MCF 10A (cell line): ENCODE measurements at regions of chr4 and their contacts with region 1.

Region 1: GRCh38 chr4:54971474-54971950 is 153.9 kb downstream of the KDR start:
- DNase-seq: peak; percentile 63
- H3K4me3 Mint-ChIP-seq: no peak overlapping the region
- H3K27ac Mint-ChIP-seq: peak overlapping the region; percentile 78
- H3K4me1 Mint-ChIP-seq: peaks cover 6% of the 10 kb centered on the region
- H3K27me3 Mint-ChIP-seq: no peaks in the 10 kb centered on the region
- CTCF ChIP-seq: peak; percentile 65

Region 2: DNA sequence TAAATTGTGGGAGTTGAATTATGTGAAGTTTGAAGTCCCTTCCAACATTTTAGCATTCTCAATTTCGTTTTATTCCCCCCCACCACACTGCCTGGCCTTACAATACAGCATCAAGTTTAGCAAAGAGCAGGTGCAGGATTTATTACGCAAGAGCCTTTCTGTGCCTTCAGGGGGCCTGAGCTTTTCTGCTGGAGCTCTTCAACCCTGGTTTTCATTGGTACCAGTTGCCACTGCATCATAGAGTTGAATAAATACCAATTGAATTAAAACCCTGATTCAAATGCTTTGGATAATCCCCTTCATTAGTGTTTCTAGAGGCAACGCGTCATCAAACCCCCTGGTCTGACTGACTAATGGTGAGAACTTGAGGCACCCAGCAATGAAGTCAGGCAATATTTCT is 357.4 kb before region 1 on chr4:
- CTCF ChIA-PET with region 1: no interaction called
- POLR2A ChIA-PET with region 1: no interaction called
- intact Hi-C with region 1: no loop called
- DNase-seq: no peak
- H3K4me3 Mint-ChIP-seq: no peak overlapping the region
- H3K27ac Mint-ChIP-seq: no peak overlapping the region
- H3K4me1 Mint-ChIP-seq: no peaks in the 10 kb centered on the region
- H3K27me3 Mint-ChIP-seq: peaks cover 10% of the 10 kb centered on the region
- CTCF ChIP-seq: no peak

Region 3: GRCh38 chr4:54823616-54824015 is 147.9 kb before region 1 on chr4:
- CTCF ChIA-PET with region 1: no interaction called
- POLR2A ChIA-PET with region 1: no interaction called
- intact Hi-C with region 1: no loop called
- DNase-seq: no peak
- H3K4me3 Mint-ChIP-seq: no peak overlapping the region
- H3K27ac Mint-ChIP-seq: no peak overlapping the region
- H3K4me1 Mint-ChIP-seq: no peaks in the 10 kb centered on the region
- H3K27me3 Mint-ChIP-seq: no peaks in the 10 kb centered on the region
- CTCF ChIP-seq: no peak

Region 4: GRCh38 chr4:54961357-54961975 is 10.0 kb before region 1 on chr4:
- CTCF ChIA-PET with region 1: interaction called, 64 read pairs
- POLR2A ChIA-PET with region 1: interaction called, 4 read pairs
- intact Hi-C with region 1: no loop called
- DNase-seq: peak; percentile 54
- H3K4me3 Mint-ChIP-seq: no peak overlapping the region
- H3K27ac Mint-ChIP-seq: no peak overlapping the region
- H3K4me1 Mint-ChIP-seq: no peaks in the 10 kb centered on the region
- H3K27me3 Mint-ChIP-seq: peaks cover 24% of the 10 kb centered on the region
- CTCF ChIP-seq: peak; percentile 54

Region 5: DNA sequence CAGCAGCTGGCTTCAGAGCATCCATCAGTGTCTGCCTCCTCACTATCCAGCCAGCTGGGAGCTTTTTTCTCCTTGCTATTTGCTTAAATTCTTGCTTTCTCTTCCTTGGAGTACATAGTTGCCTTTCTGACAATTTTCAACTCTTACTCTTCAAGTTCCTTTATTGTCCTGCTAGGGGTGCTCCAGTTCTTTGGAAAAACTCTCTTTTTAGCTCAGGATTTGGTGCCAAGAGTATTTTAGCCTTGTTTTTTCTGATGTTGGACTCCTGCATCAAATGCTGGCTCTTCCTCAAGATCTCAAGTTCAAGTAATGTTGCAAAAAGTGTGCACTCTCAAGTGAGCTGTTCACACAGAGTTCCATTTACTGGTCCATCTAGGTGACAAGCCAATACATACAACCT is 27.5 kb after region 1 on chr4:
- CTCF ChIA-PET with region 1: interaction called, 23 read pairs
- POLR2A ChIA-PET with region 1: no interaction called
- intact Hi-C with region 1: no loop called
- DNase-seq: peak; percentile 47
- H3K4me3 Mint-ChIP-seq: no peak overlapping the region
- H3K27ac Mint-ChIP-seq: no peak overlapping the region
- H3K4me1 Mint-ChIP-seq: peaks cover 26% of the 10 kb centered on the region
- H3K27me3 Mint-ChIP-seq: no peaks in the 10 kb centered on the region
- CTCF ChIP-seq: peak; percentile 47

Region 6: DNA sequence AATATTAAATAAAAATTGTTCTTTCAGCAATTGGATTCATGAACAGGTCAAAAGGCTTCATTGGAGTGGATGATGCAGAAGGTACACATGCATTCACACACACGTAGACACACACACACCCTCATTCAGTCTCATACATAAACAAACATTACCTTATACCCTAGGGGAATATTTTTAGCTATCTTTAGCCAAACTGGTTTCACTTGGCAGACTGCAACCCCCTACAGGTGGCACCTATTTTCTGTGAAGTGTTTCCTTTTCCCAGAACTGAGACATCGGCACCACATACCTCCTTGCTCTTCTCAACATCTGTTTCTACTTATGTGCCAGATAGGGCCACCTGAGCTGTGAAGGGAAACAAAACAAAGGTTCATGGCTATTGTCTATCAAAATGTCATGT is 172.4 kb after region 1 on chr4:
- CTCF ChIA-PET with region 1: no interaction called
- POLR2A ChIA-PET with region 1: no interaction called
- intact Hi-C with region 1: no loop called
- DNase-seq: peak; percentile 57
- H3K4me3 Mint-ChIP-seq: no peak overlapping the region
- H3K27ac Mint-ChIP-seq: peak overlapping the region; percentile 47
- H3K4me1 Mint-ChIP-seq: peaks cover 7% of the 10 kb centered on the region
- H3K27me3 Mint-ChIP-seq: no peaks in the 10 kb centered on the region
- CTCF ChIP-seq: no peak

Region 7: DNA sequence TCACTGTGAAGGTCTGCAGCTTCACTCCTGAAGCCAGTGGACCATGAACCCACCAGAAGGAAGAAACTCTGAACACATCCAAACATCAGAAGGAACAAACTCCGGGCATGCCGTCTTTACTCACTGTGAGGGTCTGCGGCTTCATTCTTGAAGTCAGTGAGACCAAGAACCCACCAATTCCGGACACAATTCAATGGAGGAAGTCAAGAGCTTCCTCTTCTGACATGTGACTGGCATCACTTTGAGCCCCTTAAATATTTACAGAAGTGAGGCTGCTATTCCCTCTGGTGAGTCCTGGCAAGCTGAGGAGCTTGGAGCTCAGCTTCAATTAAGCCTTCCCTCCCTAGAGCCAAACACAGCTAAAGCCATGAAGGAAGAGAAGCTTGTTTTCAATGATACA is 271.0 kb after region 1 on chr4:
- CTCF ChIA-PET with region 1: no interaction called
- POLR2A ChIA-PET with region 1: no interaction called
- intact Hi-C with region 1: no loop called
- DNase-seq: no peak
- H3K4me3 Mint-ChIP-seq: no peak overlapping the region
- H3K27ac Mint-ChIP-seq: no peak overlapping the region
- H3K4me1 Mint-ChIP-seq: no peaks in the 10 kb centered on the region
- H3K27me3 Mint-ChIP-seq: no peaks in the 10 kb centered on the region
- CTCF ChIP-seq: no peak

Region 8: GRCh38 chr4:55312489-55313101 is 341.1 kb after region 1 on chr4:
- CTCF ChIA-PET with region 1: interaction called, 43 read pairs
- POLR2A ChIA-PET with region 1: interaction called, 4 read pairs
- intact Hi-C with region 1: no loop called
- DNase-seq: peak; percentile 65
- H3K4me3 Mint-ChIP-seq: no peak overlapping the region
- H3K27ac Mint-ChIP-seq: no peak overlapping the region
- H3K4me1 Mint-ChIP-seq: no peaks in the 10 kb centered on the region
- H3K27me3 Mint-ChIP-seq: no peaks in the 10 kb centered on the region
- CTCF ChIP-seq: peak; percentile 52

Region 9: DNA sequence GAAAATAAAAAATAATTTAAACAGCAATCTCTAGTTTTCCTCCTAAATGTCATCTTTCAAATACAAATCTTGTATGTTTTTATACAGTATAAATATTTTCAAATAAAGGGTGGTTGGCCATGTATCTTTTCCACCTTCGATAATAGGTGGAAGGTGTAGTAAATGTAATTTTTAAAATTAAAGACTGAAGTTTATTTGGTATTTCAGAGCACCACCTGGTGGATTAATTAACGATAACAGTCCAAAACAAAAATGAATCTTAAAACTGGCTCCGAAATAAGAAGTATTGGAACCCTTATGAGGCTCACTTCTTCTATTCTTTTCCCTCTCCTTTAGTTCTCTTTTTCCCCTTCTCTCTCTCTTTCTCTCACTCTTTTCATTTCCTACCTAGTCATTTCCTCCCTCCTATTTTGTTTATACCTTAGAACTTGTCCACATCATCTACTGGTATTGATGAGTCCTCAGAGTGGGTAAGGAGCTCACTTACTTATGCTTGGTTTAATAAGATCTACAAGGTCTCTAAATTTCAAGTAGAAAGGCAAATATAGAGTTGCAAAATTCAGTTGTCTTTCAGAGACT is 765.2 kb after region 1 on chr4:
- CTCF ChIA-PET with region 1: interaction called, 7 read pairs
- POLR2A ChIA-PET with region 1: no interaction called
- intact Hi-C with region 1: loop called (anchors 1 kb)
- DNase-seq: peak; percentile 27
- H3K4me3 Mint-ChIP-seq: no peak overlapping the region
- H3K27ac Mint-ChIP-seq: no peak overlapping the region
- H3K4me1 Mint-ChIP-seq: peaks cover 11% of the 10 kb centered on the region
- H3K27me3 Mint-ChIP-seq: no peaks in the 10 kb centered on the region
- CTCF ChIP-seq: peak; percentile 47